ENCODE measurements at regions of chr11 and their contacts with region 1.

Region 1: GRCh38 chr11:100575870-100576705 is 111.0 kb upstream of the ARHGAP42 start:
- DNase-seq: peak in 2 of 9 experiments; percentile 15 to 41
- ATAC-seq: no peak
- H3K4me3 ChIP-seq: no peak overlapping the region
- H3K4me3 Mint-ChIP-seq: no peak overlapping the region
- H3K27ac ChIP-seq: no peak overlapping the region
- H3K27ac Mint-ChIP-seq: no peak overlapping the region
- H3K4me1 ChIP-seq: no peaks in the 10 kb centered on the region
- H3K4me1 Mint-ChIP-seq: no peaks in the 10 kb centered on the region
- H3K27me3 ChIP-seq: no peaks in the 10 kb centered on the region
- H3K27me3 Mint-ChIP-seq: peaks cover 5% of the 10 kb centered on the region
- CTCF ChIP-seq: no peak

Region 2: GRCh38 chr11:100525635-100526034 is 50.5 kb before region 1 on chr11:
- CTCF ChIA-PET with region 1: no interaction called
- POLR2A ChIA-PET with region 1: no interaction called
- intact Hi-C with region 1: no loop called
- DNase-seq: no peak
- ATAC-seq: no peak
- H3K4me3 ChIP-seq: no peak overlapping the region
- H3K4me3 Mint-ChIP-seq: no peak overlapping the region
- H3K27ac ChIP-seq: no peak overlapping the region
- H3K27ac Mint-ChIP-seq: no peak overlapping the region
- H3K4me1 ChIP-seq: no peaks in the 10 kb centered on the region
- H3K4me1 Mint-ChIP-seq: no peaks in the 10 kb centered on the region
- H3K27me3 ChIP-seq: no peaks in the 10 kb centered on the region
- H3K27me3 Mint-ChIP-seq: no peaks in the 10 kb centered on the region
- CTCF ChIP-seq: no peak

Region 3: DNA sequence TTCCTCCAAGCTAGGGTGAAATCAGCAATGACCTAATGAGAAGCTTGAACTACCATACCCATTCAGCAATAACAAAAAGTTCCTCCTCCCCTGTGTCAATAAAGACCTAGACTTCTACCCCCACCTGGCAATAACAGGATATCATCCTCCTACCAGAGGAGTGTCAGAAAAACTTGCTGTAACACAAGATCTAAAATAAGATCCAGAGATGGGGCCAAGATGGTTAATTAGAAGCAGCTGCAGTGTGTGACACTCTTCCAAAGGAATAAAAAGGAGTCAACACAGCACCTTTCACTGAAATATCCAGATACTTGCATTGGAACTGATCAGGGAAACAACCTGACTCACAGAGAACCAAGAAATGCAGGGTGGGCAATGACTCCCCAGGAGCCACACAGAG is 26.6 kb after region 1 on chr11:
- CTCF ChIA-PET with region 1: no interaction called
- POLR2A ChIA-PET with region 1: no interaction called
- intact Hi-C with region 1: loop called in 1 of 2 experiments (anchors 1 kb)
- DNase-seq: no peak
- ATAC-seq: no peak
- H3K4me3 ChIP-seq: no peak overlapping the region
- H3K4me3 Mint-ChIP-seq: no peak overlapping the region
- H3K27ac ChIP-seq: no peak overlapping the region
- H3K27ac Mint-ChIP-seq: no peak overlapping the region
- H3K4me1 ChIP-seq: no peaks in the 10 kb centered on the region
- H3K4me1 Mint-ChIP-seq: no peaks in the 10 kb centered on the region
- H3K27me3 ChIP-seq: no peaks in the 10 kb centered on the region
- H3K27me3 Mint-ChIP-seq: no peaks in the 10 kb centered on the region
- CTCF ChIP-seq: no peak

Region 4: DNA sequence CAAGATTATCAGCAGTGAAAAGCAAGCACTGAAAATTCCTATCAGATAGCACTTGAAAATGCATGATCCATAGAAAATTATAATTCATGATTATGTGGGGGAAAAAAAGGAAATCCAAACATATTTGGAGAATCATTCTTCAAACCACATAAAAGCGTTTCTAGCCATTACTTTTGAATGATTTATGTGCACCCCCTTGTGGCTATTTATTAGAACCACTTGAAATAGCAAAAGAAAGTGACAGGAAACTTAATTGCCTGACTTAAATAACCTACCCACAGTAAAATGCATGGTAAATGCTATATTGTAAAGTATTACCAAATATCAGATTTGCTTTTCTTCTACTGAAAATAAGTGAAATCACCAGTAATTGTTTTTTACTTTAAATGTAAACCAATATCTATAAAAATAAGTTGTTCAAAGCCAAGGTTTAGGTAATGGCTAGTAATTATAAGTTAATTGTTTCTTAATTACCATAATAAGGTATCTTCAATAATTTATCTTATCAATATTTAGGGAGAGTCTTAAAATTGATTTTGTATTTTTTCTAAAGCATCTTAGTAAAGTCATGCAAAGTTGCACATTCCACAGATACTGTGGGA is 279.5 kb after region 1 on chr11:
- CTCF ChIA-PET with region 1: no interaction called
- POLR2A ChIA-PET with region 1: no interaction called
- intact Hi-C with region 1: loop called (anchors 5 to 10 kb)
- DNase-seq: peak in 1 of 9 experiments; percentile 1
- ATAC-seq: no peak
- H3K4me3 ChIP-seq: no peak overlapping the region
- H3K4me3 Mint-ChIP-seq: no peak overlapping the region
- H3K27ac ChIP-seq: no peak overlapping the region
- H3K27ac Mint-ChIP-seq: no peak overlapping the region
- H3K4me1 ChIP-seq: no peaks in the 10 kb centered on the region
- H3K4me1 Mint-ChIP-seq: no peaks in the 10 kb centered on the region
- H3K27me3 ChIP-seq: no peaks in the 10 kb centered on the region
- H3K27me3 Mint-ChIP-seq: no peaks in the 10 kb centered on the region
- CTCF ChIP-seq: no peak

Region 5: GRCh38 chr11:100930185-100930778 is 354.2 kb after region 1 on chr11:
- CTCF ChIA-PET with region 1: no interaction called
- POLR2A ChIA-PET with region 1: no interaction called
- intact Hi-C with region 1: loop called in 1 of 2 experiments (anchors 5 kb)
- DNase-seq: peak in 2 of 9 experiments; percentile 3 to 29
- ATAC-seq: no peak
- H3K4me3 ChIP-seq: no peak overlapping the region
- H3K4me3 Mint-ChIP-seq: no peak overlapping the region
- H3K27ac ChIP-seq: no peak overlapping the region
- H3K27ac Mint-ChIP-seq: no peak overlapping the region
- H3K4me1 ChIP-seq: no peaks in the 10 kb centered on the region
- H3K4me1 Mint-ChIP-seq: no peaks in the 10 kb centered on the region
- H3K27me3 ChIP-seq: no peaks in the 10 kb centered on the region
- H3K27me3 Mint-ChIP-seq: no peaks in the 10 kb centered on the region
- CTCF ChIP-seq: peak; percentile 43

Region 6: GRCh38 chr11:102007567-102008437 is 1431.7 kb after region 1 on chr11:
- CTCF ChIA-PET with region 1: no interaction called
- POLR2A ChIA-PET with region 1: no interaction called
- intact Hi-C with region 1: loop called (anchors 10 kb)
- DNase-seq: peak in 2 of 9 experiments; percentile 31 to 49
- ATAC-seq: no peak
- H3K4me3 ChIP-seq: no peak overlapping the region
- H3K4me3 Mint-ChIP-seq: no peak overlapping the region
- H3K27ac ChIP-seq: no peak overlapping the region
- H3K27ac Mint-ChIP-seq: no peak overlapping the region
- H3K4me1 ChIP-seq: no peaks in the 10 kb centered on the region
- H3K4me1 Mint-ChIP-seq: no peaks in the 10 kb centered on the region
- H3K27me3 ChIP-seq: peaks cover 0 to 2% of the 10 kb centered on the region in 2 experiments
- H3K27me3 Mint-ChIP-seq: peaks cover 12% of the 10 kb centered on the region
- CTCF ChIP-seq: peak; percentile 65

Measured in CD8-positive, alpha-beta T cell (primary cell).